AG04449 (cell line): ENCODE measurements at regions of chr7 and their contacts with region 1.

Region 1: GRCh38 chr7:139431010-139431409 is 52.5 kb downstream of the KLRG2 start:
- DNase-seq: no peak
- H3K4me3 ChIP-seq: no peak overlapping the region
- CTCF ChIP-seq: no peak

Region 2: DNA sequence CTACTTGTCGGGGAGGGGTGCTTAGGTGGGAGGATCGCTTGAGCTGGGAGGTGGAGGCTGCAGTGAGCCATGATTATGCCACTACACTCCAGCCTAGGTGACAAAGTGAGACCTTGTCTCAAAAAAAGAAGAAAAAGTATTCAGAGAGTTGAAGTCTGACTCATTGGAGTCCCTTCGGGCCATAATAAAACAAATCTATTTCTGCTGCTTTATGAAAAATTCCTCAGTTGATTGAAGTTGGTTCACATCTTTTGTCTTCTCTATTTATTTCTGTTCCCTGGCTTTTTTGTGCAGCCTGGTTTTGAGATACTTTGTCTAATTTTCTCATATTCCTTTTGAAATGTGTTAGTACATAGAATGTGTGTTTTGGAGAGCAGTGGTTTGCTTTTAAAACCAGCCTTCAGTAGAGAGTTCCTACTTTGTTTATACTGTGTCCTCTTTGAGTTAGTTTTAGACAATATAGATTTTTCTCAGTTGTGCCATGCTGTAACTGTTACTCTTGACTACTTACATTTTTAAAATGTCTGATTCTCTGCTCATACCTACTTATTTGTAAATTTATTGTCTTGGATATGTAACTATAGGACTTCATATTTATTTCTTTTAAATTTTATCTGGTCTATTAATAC is 34.6 kb before region 1 on chr7:
- CTCF ChIA-PET with region 1: interaction called, 11 read pairs
- POLR2A ChIA-PET with region 1: no interaction called
- DNase-seq: no peak
- H3K4me3 ChIP-seq: no peak overlapping the region
- CTCF ChIP-seq: no peak

Region 3: GRCh38 chr7:139407555-139407954 is 23.5 kb before region 1 on chr7:
- CTCF ChIA-PET with region 1: interaction called, 71 read pairs
- POLR2A ChIA-PET with region 1: no interaction called
- DNase-seq: no peak
- H3K4me3 ChIP-seq: no peak overlapping the region
- CTCF ChIP-seq: no peak

Region 4: GRCh38 chr7:139452958-139453672 is 22.1 kb after region 1 on chr7:
- CTCF ChIA-PET with region 1: interaction called, 93 read pairs
- POLR2A ChIA-PET with region 1: no interaction called
- DNase-seq: no peak
- H3K4me3 ChIP-seq: no peak overlapping the region
- CTCF ChIP-seq: peak; percentile 4

Region 5: GRCh38 chr7:139471740-139472353 is 40.8 kb after region 1 on chr7:
- CTCF ChIA-PET with region 1: interaction called, 10 read pairs
- POLR2A ChIA-PET with region 1: no interaction called
- DNase-seq: no peak
- H3K4me3 ChIP-seq: no peak overlapping the region
- CTCF ChIP-seq: no peak

Region 6: GRCh38 chr7:139502226-139502625 is 71.2 kb after region 1 on chr7:
- CTCF ChIA-PET with region 1: interaction called, 12 read pairs
- POLR2A ChIA-PET with region 1: no interaction called
- DNase-seq: no peak
- H3K4me3 ChIP-seq: no peak overlapping the region
- CTCF ChIP-seq: no peak